ENCODE measurements at regions of chrX and their contacts with region 1.

Region 1: GRCh38 chrX:9462456-9462855 is 2.4 kb upstream of the TBL1X start:
- DNase-seq: no peak
- ATAC-seq: no peak
- H3K4me3 Mint-ChIP-seq: peak overlapping the region; percentile 47
- H3K27ac Mint-ChIP-seq: peak overlapping the region; percentile 85
- H3K4me1 Mint-ChIP-seq: peaks cover 30% of the 10 kb centered on the region
- H3K27me3 Mint-ChIP-seq: no peaks in the 10 kb centered on the region

Region 2: GRCh38 chrX:9341291-9342201 is 120.9 kb before region 1 on chrX:
- POLR2A ChIA-PET with region 1: interaction called, 16 read pairs
- DNase-seq: peak; percentile 49
- ATAC-seq: peak; percentile 53
- H3K4me3 Mint-ChIP-seq: peak overlapping the region; percentile 73
- H3K27ac Mint-ChIP-seq: peak overlapping the region; percentile 93
- H3K4me1 Mint-ChIP-seq: peaks cover 20% of the 10 kb centered on the region
- H3K27me3 Mint-ChIP-seq: no peaks in the 10 kb centered on the region

Measured in activated naive CD8-positive, alpha-beta T cell treated with anti-CD3 and anti-CD28 coated beads, Interleukin-2, amount 10 ng/mL, durations not matched to agents 7 days and 5 days (primary cell).